ENCODE measurements at regions of chr3 and their contacts with region 1.

Region 1: DNA sequence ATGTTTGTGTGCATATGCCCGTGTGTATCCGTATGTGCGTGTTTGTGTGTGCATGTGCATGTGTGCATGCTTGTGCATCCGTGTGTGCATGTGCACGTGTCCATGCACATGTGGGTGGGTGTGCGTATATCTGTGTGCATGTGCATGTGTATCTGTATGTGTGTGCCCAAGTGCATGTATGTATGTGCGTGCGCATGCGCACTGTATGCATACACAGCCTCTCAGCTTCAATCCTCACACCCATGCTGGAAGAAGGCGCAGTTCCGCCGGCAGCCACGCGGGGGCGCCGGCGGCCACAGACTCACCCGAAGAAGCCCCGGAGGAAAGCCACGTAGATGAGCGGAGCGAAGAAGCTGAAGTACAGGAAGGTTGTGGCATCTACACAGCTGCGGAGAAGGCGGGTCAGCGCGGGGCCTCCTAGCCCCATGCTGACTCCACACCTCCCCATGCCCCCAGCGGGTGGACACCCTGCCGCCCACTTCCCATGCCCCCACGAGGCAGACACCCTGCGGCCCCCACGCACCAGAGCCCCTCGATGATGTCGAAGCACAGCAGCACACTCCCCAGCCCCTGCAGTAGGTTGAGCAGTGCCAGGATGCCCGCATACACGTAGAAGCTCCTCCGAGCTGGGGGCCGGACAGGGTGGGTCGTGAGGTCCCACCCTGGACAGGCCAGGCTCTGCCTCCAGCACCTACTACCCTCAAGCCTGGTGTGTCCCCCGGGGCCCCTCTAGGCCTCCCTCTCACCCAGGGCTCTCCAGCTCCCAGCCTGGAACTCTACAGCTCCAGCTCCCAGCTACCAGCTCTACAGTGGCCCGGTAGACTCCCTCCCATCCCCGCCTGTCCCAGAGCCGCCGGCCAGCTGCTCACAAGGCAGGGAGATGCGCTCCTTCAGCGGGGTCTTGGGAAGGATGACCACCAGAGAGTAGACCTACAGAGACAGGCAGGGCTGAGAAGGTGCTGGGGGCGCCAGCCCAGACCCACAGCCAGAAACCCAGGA is 15.4 kb downstream of the TPRA1 start:
- DNase-seq: peak; percentile 87
- ATAC-seq: peak; percentile 97
- H3K4me3 ChIP-seq: no peak overlapping the region
- H3K27ac ChIP-seq: no peak overlapping the region
- H3K4me1 ChIP-seq: peaks cover 3% of the 10 kb centered on the region; the same call in 1 of the 2 replicates
- H3K27me3 ChIP-seq: no peaks in the 10 kb centered on the region
- CTCF ChIP-seq: peak; percentile 99
- POLR2A ChIP-seq: no peak
- RAD21 ChIP-seq: peak; percentile 92

Region 2: DNA sequence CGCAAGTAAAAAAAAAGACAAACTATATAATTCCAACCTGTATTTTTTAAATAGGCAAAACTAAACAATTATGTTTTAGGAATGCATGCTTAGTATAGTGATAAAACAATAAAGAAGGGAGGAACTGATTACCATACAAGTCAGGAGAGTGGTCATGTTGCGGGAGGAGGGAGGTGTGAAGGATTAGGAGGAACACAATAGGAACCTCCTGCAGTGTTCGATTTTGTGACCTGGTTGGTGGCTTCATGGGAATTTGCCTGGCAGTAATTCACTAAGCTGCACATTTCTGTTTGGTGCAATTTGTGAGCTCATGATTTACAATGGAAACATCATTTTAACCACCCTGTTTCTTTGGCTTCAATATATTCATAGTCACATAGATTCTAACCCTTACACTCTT is 62.9 kb before region 1 on chr3:
- CTCF ChIA-PET with region 1: no interaction called
- POLR2A ChIA-PET with region 1: no interaction called
- dilution Hi-C with region 1: no loop called
- in situ Hi-C with region 1: no loop called
- intact Hi-C with region 1: no loop called
- DNase-seq: no peak
- ATAC-seq: no peak
- H3K4me3 ChIP-seq: no peak overlapping the region
- H3K27ac ChIP-seq: no peak overlapping the region
- H3K4me1 ChIP-seq: no peaks in the 10 kb centered on the region
- H3K27me3 ChIP-seq: peaks cover 2% of the 10 kb centered on the region; the same call in 1 of the 2 replicates
- CTCF ChIP-seq: no peak
- POLR2A ChIP-seq: no peak
- RAD21 ChIP-seq: no peak

Region 3: DNA sequence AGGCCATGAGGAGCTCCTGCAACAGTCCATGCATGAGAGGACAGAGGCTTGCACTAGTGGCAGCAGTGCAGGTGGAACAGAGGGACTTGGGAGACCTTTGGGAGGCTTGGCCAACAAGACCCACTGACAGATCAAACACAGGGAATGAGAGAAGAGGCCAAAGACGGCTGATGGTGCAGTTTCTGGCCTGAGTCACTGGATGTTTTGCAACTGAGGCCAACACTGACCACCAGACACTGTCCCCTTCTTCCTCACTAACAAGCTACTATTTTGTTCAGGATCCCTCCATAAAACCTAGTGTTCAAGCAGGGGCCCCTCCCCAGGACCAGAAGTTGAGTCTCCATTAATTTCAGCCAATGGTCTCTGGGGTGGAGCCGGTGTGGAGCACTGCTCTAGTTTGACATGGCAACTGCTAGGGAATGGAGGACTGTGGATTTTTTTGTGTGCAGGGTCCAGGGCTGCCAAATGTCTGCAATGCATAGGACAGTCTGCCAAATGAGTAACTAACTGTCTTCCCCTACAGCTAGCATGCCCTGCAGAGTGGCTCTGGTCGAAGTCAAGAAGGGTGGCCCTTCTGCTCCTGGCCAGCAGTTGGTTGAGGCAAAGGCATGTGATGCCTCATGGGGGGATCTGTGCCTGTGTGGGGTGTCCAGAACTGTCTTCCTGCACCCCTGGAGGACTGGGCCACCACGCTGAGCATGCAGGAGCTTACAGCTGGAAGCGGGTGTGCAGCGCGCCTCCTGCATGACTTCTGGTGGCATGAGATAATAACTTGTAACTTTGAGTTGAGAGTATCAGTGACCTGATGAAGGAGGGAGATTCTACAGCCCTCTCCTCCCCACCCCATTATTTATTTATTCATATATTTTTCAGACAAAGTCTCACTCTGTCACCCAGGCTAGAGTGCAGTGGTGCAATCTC is 10.6 kb after region 1 on chr3:
- CTCF ChIA-PET with region 1: interaction called, 20 read pairs
- POLR2A ChIA-PET with region 1: no interaction called
- dilution Hi-C with region 1: no loop called
- in situ Hi-C with region 1: no loop called
- intact Hi-C with region 1: no loop called
- DNase-seq: peak; percentile 54
- ATAC-seq: no peak
- H3K4me3 ChIP-seq: no peak overlapping the region
- H3K27ac ChIP-seq: no peak overlapping the region
- H3K4me1 ChIP-seq: peaks cover 15% of the 10 kb centered on the region
- H3K27me3 ChIP-seq: no peaks in the 10 kb centered on the region
- CTCF ChIP-seq: no peak
- POLR2A ChIP-seq: no peak
- RAD21 ChIP-seq: no peak

Region 4: DNA sequence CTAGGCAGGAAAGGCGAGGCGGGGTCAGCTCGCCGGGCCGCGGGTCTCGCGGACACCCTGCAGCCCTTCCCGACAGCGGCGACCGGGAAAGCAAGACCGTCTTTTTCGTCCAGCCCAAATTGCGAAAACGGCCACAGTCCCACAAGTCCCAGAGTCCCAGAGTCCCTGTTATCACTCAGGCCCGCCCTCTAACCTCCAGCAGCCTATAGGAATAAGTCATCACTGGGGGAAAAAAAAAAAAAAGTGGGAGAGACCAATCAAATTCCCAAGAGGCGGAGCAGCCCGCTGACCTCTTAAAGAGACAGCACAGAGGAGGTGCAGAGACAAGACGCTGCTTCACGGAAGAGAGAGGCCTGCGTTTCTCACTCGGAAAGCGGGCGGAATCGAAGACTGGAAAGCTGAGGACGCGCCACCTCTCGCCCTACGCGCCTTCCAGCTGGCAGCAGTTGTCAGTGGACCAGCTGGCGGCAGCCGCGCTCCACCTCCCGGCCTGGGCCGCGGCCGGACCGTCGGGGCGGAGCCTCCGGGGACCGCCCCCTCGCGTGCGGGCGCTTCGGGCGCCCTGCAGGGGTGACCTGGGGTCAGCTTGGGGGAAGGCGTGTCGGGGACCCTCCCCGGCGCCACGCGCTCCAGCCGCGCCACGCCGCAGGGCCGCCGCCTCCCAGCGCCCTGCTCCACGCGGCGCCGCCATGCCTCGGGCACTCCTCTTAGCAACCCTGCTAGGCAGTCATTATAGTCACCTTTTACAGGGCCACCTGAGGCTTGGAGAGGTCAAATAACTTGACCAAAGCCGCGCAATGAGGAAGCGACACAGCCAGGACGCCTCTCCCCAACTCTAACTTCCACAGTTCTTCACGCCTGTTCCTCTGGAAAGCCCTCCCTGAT is 15.7 kb after region 1 on chr3 and contains the start of gene TPRA1:
- CTCF ChIA-PET with region 1: interaction called, 20 read pairs
- POLR2A ChIA-PET with region 1: no interaction called
- dilution Hi-C with region 1: no loop called
- in situ Hi-C with region 1: no loop called
- intact Hi-C with region 1: no loop called
- DNase-seq: peak; percentile 96
- ATAC-seq: peak; percentile 77
- H3K4me3 ChIP-seq: peak within 1 kb of the TSS; percentile 51
- H3K27ac ChIP-seq: peak within 1 kb of the TSS; percentile 86
- H3K4me1 ChIP-seq: peaks cover 15% of the 10 kb centered on the region
- H3K27me3 ChIP-seq: no peaks in the 10 kb centered on the region
- CTCF ChIP-seq: peak; percentile 38
- POLR2A ChIP-seq: peak; percentile 78
- RAD21 ChIP-seq: peak; percentile 40
- total RNA-seq, gene TPRA1: 15.3 and 17.9 TPM in 2 replicates

Region 5: DNA sequence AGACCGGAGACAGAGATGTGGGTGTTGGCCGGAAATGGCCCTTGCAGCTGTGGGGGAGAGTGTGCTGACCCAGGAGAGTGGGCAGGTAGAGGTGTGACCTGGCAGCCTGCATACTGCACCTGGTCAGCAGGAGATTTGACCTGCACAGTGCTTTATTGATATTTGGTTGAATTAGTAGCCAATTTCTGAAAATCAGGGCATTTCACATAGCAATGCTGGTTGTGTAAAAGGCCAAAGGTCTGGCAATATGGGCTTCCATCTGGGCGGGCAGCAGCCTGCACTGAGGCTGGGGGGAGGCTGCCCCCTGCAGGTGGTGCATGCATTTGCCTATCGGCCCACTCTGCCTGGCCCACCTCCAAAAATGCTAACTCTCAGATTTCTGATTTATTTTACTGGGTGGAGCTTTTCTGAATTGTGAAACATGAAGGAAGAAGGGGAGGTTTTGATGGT is 256.6 kb after region 1 on chr3:
- CTCF ChIA-PET with region 1: no interaction called
- POLR2A ChIA-PET with region 1: no interaction called
- dilution Hi-C with region 1: no loop called
- in situ Hi-C with region 1: no loop called
- intact Hi-C with region 1: loop called (anchors 10 kb)
- DNase-seq: peak; percentile 49
- ATAC-seq: peak; percentile 66
- H3K4me3 ChIP-seq: no peak overlapping the region
- H3K27ac ChIP-seq: no peak overlapping the region
- H3K4me1 ChIP-seq: no peaks in the 10 kb centered on the region
- H3K27me3 ChIP-seq: no peaks in the 10 kb centered on the region
- CTCF ChIP-seq: peak; percentile 73
- POLR2A ChIP-seq: no peak
- RAD21 ChIP-seq: peak; percentile 86

Region 6: GRCh38 chr3:127970966-127971592 is 395.9 kb after region 1 on chr3:
- CTCF ChIA-PET with region 1: interaction called, 4 read pairs
- POLR2A ChIA-PET with region 1: no interaction called
- dilution Hi-C with region 1: no loop called
- in situ Hi-C with region 1: no loop called
- intact Hi-C with region 1: loop called (anchors 2 kb)
- DNase-seq: peak; percentile 60
- ATAC-seq: peak; percentile 86
- H3K4me3 ChIP-seq: no peak overlapping the region
- H3K27ac ChIP-seq: no peak overlapping the region
- H3K4me1 ChIP-seq: no peaks in the 10 kb centered on the region
- H3K27me3 ChIP-seq: peaks cover 51% of the 10 kb centered on the region
- CTCF ChIP-seq: peak; percentile 72
- POLR2A ChIP-seq: no peak
- RAD21 ChIP-seq: peak; percentile 86

Measured in IMR-90 (cell line).